Mammary epithelial cell (primary cell): ENCODE measurements at regions of chr11 and their contacts with region 1.

Region 1: GRCh38 chr11:13772223-13773046 is 104.0 kb downstream of the FAR1 start:
- DNase-seq: peak; percentile 58
- H3K4me3 ChIP-seq: no peak overlapping the region
- H3K27ac ChIP-seq: no peak overlapping the region
- H3K4me1 ChIP-seq: no peaks in the 10 kb centered on the region
- H3K27me3 ChIP-seq: no peaks in the 10 kb centered on the region
- CTCF ChIP-seq: peak; percentile 47 to 60

Region 2: DNA sequence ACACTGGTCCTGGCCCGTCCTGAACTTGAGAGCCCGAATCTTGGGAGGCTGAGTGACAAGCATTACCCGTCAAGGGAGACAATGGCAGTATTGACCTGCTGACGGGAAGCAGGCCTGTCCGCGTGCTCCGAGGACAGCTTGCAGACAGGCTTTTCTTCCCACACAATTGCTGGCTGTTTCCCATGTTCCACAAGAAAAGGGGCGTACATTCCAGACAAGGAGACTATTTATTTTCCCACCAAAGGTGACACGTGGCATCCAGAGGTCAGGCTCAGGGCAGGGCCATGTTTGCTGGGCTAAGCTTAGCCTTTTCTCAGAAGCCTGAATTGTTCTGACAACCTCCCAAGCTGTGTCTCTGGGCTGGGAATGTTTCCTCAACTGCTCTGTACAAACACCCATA is 103.2 kb after region 1 on chr11:
- CTCF ChIA-PET with region 1: no interaction called
- dilution Hi-C with region 1: no loop called
- in situ Hi-C with region 1: no loop called
- intact Hi-C with region 1: loop called (anchors 5 kb)
- DNase-seq: no peak
- H3K4me3 ChIP-seq: no peak overlapping the region
- H3K27ac ChIP-seq: no peak overlapping the region
- H3K4me1 ChIP-seq: peaks cover 11% of the 10 kb centered on the region
- H3K27me3 ChIP-seq: peaks cover 3% of the 10 kb centered on the region
- CTCF ChIP-seq: no peak

Region 3: DNA sequence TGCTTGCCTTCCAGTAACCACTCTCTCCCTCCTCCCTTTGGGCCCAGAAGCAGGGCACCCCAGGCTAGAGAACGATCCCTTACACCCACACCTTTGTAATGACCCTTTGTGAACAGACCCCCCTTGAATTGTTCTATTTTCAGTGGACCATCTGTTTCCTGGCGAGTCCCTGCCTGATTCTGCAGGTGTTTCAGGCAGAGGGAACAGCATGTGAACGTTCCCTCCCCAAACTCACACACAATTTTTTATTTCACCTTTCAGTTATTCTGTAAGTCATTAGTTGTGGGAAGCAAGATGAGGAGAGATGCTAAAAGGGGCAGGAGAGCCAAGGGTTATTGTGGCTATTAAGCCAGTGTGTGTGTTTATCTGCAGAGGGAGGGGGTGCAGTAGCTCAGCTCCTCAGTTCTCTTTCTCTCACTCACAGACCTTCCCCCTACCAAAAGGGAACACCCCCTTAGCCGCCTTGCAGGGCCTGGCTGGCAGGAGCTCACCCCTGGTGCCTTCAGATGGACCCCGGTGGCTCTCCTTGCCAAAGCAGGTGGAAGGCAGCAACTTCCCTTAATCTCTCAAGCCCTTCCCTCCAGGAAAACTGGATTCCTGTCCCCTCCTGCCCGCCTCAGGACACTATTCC is 125.3 kb after region 1 on chr11:
- CTCF ChIA-PET with region 1: no interaction called
- dilution Hi-C with region 1: no loop called
- in situ Hi-C with region 1: no loop called
- intact Hi-C with region 1: no loop called
- DNase-seq: no peak
- H3K4me3 ChIP-seq: no peak overlapping the region
- H3K27ac ChIP-seq: no peak overlapping the region
- H3K4me1 ChIP-seq: no peaks in the 10 kb centered on the region
- H3K27me3 ChIP-seq: no peaks in the 10 kb centered on the region
- CTCF ChIP-seq: no peak

Region 4: GRCh38 chr11:13949876-13950275 is 177.4 kb after region 1 on chr11:
- CTCF ChIA-PET with region 1: no interaction called
- dilution Hi-C with region 1: no loop called
- in situ Hi-C with region 1: loop called (anchors 10 kb)
- intact Hi-C with region 1: loop called (anchors 1 kb)
- DNase-seq: no peak
- H3K4me3 ChIP-seq: no peak overlapping the region
- H3K27ac ChIP-seq: no peak overlapping the region
- H3K4me1 ChIP-seq: no peaks in the 10 kb centered on the region
- H3K27me3 ChIP-seq: peaks cover 2% of the 10 kb centered on the region
- CTCF ChIP-seq: peak in 1 of 2 donors; percentile 18

Region 5: GRCh38 chr11:14148653-14149273 is 376.3 kb after region 1 on chr11:
- CTCF ChIA-PET with region 1: interaction called, 3 read pairs
- dilution Hi-C with region 1: no loop called
- in situ Hi-C with region 1: loop called in 1 of 2 experiments (anchors 10 kb)
- intact Hi-C with region 1: loop called (anchors 1 kb)
- DNase-seq: peak; percentile 45
- H3K4me3 ChIP-seq: no peak overlapping the region
- H3K27ac ChIP-seq: no peak overlapping the region
- H3K4me1 ChIP-seq: no peaks in the 10 kb centered on the region
- H3K27me3 ChIP-seq: no peaks in the 10 kb centered on the region
- CTCF ChIP-seq: peak; percentile 73 to 83

Region 6: GRCh38 chr11:14249121-14249963 is 476.9 kb after region 1 on chr11:
- CTCF ChIA-PET with region 1: no interaction called
- dilution Hi-C with region 1: no loop called
- in situ Hi-C with region 1: loop called (anchors 5 kb)
- intact Hi-C with region 1: loop called (anchors 1 kb)
- DNase-seq: peak; percentile 36
- H3K4me3 ChIP-seq: no peak overlapping the region
- H3K27ac ChIP-seq: no peak overlapping the region
- H3K4me1 ChIP-seq: no peaks in the 10 kb centered on the region
- H3K27me3 ChIP-seq: peaks cover 3% of the 10 kb centered on the region
- CTCF ChIP-seq: peak; percentile 70 to 85